Mammary epithelial cell (primary cell): ENCODE measurements at regions of chr19 and their contacts with region 1.

Region 1: DNA sequence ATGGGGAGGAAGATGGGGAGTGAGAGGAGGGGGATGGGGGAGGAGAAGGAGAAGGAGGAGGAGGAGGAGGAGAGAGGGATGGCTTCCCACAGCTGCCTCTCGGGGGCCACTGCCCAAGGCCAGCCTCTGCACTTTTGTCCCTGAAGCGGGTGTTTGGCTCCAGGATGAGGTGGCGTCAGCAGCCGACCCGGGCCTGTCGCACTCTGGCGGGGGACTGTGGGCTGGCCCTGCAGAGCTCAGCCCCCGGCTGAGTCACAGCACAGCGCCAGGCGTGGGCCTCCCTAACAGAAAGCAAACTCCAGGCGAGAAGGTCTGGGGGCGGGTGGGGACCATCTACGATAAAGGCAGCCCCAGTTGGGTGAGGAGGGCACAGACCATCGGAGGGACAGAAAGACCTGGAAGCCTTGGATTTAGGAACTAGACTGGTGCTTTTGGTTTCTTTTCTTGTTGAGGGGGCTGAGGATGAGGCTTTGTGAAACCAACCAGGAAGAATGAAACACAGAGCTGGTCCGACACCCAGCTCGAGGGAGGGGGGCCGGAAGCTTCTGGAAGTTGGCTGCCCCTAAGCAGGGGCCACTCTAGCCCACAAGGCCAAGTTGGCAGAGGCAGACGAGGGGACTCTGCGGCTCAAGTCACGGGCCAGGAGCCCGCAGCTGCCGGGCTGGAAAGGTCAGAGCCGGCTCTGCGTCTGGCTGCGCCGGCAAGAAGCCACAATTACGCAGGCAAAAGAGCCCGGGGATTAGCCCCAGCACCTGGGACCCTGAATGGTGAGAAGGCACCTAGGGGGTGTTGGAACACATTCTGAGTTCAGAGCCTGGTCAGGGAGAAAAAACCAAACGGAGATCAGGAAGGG is 18.2 kb downstream of the LSM4 start:
- DNase-seq: peak; percentile 48
- H3K4me3 ChIP-seq: peak overlapping the region; percentile 8 to 21 (median 11)
- H3K27ac ChIP-seq: peak overlapping the region; percentile 66
- H3K4me1 ChIP-seq: peaks cover 28% of the 10 kb centered on the region
- H3K27me3 ChIP-seq: no peaks in the 10 kb centered on the region
- CTCF ChIP-seq: no peak

Region 2: DNA sequence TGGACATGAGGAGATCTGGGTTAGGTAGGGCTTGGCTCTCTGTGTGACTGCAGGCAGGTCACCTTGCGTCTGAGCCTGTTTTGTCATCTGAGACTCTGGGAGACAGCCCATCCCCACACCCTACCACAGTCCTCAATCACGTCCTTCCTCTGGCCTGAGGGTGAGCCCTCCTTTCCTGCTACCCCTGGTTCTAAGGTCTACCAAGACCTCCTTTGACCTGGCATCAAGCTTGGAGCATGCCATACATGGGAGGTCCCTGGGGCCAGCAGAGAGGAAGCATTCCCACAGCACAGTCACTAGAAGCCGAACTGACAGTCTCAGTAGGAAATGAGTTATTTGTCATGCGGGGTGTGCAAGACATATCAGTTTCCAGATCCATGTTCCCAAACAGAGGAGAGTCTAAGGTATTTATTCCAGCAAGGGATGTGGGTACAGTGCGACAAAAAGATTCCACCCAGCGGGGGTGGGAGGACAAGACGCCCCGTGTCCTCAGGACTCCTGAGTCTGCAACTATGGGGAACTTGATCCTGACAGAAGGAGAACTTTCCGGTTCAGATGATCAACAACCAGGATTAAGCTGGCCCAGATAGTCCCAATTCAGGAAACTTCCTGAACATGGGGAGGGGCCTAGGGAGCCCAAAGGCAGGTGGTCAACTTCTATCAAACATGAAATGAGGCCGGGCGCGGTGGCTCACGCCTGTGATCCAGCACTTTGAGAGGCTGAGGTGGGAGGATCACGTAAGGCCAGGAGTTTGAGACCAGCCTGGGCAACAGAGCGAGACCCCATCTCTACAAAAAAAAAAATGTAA is 287.2 kb before region 1 on chr19:
- CTCF ChIA-PET with region 1: no interaction called
- dilution Hi-C with region 1: loop called (anchors 5 kb)
- in situ Hi-C with region 1: no loop called
- intact Hi-C with region 1: no loop called
- DNase-seq: no peak
- H3K4me3 ChIP-seq: no peak overlapping the region
- H3K27ac ChIP-seq: no peak overlapping the region
- H3K4me1 ChIP-seq: peaks cover 18% of the 10 kb centered on the region
- H3K27me3 ChIP-seq: no peaks in the 10 kb centered on the region
- CTCF ChIP-seq: no peak

Region 3: DNA sequence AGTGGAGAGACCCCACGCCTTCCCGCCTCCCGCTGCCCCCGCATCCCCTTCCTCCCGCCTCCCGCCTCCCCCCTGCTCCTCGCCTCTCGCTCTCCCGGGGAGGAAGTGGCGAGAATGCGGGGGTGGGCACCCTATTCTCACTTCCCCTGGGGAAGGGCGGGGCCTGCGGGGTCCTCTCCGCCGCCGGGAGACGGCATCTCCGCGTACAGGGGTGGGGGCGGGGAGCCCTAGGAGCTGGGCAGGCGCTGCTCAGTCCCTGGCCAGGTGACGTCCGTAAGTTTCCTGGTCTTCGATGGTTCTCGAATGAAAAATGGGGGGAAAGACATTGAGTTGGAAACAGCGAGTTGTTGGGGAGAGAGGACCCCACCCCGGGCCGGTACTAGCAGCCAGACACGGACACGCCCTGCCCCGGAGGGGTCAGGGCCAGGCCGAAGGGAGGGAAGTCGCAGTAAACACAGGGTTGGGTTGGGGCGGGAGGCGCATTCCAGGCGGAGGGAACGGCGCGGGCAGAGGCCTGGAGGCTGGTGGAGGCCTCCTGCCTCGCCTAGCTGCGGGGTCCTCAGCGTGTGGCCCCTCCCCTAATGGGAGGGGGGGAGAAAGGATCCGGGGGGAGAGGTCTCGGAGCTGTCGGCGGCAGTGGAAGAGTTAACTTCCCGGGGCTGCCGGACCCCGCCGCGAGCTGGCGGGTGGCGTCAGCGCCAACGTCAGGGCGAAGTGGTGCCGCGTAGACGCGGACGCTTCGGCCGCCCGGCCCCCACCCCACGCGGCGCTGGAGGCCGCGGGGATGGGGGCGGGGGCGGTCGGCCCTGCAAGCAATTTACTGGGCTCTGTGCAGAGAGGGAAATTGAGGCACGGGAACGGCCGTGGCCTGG is 12.9 kb before region 1 on chr19:
- CTCF ChIA-PET with region 1: no interaction called
- dilution Hi-C with region 1: no loop called
- in situ Hi-C with region 1: no loop called
- intact Hi-C with region 1: no loop called
- DNase-seq: peak; percentile 41
- H3K4me3 ChIP-seq: peak overlapping the region; percentile 38 to 53 (median 45)
- H3K27ac ChIP-seq: peak overlapping the region; percentile 25
- H3K4me1 ChIP-seq: peaks cover 18% of the 10 kb centered on the region
- H3K27me3 ChIP-seq: no peaks in the 10 kb centered on the region
- CTCF ChIP-seq: no peak

Region 4: GRCh38 chr19:18322759-18323460 is 18.2 kb after region 1 on chr19 and contains the start of gene LSM4:
- CTCF ChIA-PET with region 1: no interaction called
- dilution Hi-C with region 1: no loop called
- in situ Hi-C with region 1: no loop called
- intact Hi-C with region 1: loop called (anchors 2 kb)
- DNase-seq: peak; percentile 98
- H3K4me3 ChIP-seq: peak within 1 kb of the TSS; percentile 73 to 95 (median 82)
- H3K27ac ChIP-seq: peak within 1 kb of the TSS; percentile 82
- H3K4me1 ChIP-seq: peaks cover 16% of the 10 kb centered on the region
- H3K27me3 ChIP-seq: no peaks in the 10 kb centered on the region
- CTCF ChIP-seq: peak; percentile 15 to 61
- total RNA-seq, gene LSM4: 127 to 182 TPM

Region 5: DNA sequence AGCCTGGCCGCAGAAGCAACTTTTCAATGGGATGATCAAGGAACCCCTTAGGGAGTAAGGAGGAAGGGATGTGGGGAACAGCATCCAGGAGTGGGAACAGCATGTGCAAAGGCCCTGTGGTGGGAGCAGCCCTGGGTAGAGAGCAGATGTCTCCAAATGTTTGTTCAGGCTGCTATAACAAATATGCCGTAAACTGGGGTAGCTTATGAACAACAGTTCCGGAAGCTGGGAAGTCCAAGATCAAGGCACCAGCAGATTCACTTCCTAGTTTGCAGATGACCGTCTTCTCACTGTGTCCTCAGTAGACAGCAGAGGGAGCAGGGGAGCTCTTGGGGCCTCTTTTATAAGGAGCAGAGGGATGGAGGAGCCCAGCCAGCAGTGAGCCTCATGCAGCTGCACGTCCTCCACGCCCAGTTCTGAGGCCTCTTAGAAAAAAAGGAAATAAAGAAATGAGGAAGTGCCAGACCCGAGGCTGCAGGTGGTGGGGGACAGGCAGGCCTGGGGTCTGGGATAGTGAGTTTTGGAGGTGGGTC is 97.0 kb after region 1 on chr19:
- CTCF ChIA-PET with region 1: no interaction called
- dilution Hi-C with region 1: loop called (anchors 10 kb)
- in situ Hi-C with region 1: no loop called
- intact Hi-C with region 1: no loop called
- DNase-seq: peak; percentile 60
- H3K4me3 ChIP-seq: no peak overlapping the region
- H3K27ac ChIP-seq: no peak overlapping the region
- H3K4me1 ChIP-seq: peaks cover 3% of the 10 kb centered on the region
- H3K27me3 ChIP-seq: no peaks in the 10 kb centered on the region
- CTCF ChIP-seq: peak; percentile 24 to 54

Region 6: DNA sequence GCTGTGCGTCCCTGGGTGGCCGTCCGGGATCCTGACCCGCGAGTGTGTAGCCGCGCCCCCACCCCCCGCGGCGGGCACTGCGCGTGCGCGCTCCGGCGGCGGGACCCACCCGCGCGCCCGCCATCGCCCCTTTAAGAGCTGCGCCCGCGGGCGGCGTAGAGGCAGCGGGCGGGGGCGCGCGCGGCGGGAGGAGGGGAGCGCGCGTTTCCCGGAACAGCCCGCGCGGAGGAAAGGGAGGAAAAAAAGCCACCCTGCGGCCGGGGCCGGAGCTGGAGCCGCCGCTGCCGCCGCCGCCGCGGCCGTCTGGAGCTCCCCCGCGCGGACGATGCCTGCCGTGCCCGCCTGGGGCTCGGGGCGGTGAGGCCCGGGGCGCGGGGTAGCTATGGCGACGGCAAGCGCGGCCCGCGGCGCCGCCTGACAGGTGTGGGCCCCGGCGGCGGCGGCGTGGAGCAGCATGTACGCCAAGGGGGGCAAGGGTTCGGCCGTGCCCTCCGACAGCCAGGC is 114.6 kb after region 1 on chr19 and contains the start of gene SSBP4:
- CTCF ChIA-PET with region 1: no interaction called
- dilution Hi-C with region 1: loop called (anchors 5 kb)
- in situ Hi-C with region 1: no loop called
- intact Hi-C with region 1: no loop called
- DNase-seq: peak; percentile 68
- H3K4me3 ChIP-seq: peak within 1 kb of the TSS; percentile 59 to 69 (median 60)
- H3K27ac ChIP-seq: no peak within 1 kb of the TSS
- H3K4me1 ChIP-seq: peaks cover 27% of the 10 kb centered on the region
- H3K27me3 ChIP-seq: no peaks in the 10 kb centered on the region
- CTCF ChIP-seq: peak in 1 of 2 donors; percentile 31
- total RNA-seq, gene SSBP4: 34.0 to 41.0 TPM

Region 7: DNA sequence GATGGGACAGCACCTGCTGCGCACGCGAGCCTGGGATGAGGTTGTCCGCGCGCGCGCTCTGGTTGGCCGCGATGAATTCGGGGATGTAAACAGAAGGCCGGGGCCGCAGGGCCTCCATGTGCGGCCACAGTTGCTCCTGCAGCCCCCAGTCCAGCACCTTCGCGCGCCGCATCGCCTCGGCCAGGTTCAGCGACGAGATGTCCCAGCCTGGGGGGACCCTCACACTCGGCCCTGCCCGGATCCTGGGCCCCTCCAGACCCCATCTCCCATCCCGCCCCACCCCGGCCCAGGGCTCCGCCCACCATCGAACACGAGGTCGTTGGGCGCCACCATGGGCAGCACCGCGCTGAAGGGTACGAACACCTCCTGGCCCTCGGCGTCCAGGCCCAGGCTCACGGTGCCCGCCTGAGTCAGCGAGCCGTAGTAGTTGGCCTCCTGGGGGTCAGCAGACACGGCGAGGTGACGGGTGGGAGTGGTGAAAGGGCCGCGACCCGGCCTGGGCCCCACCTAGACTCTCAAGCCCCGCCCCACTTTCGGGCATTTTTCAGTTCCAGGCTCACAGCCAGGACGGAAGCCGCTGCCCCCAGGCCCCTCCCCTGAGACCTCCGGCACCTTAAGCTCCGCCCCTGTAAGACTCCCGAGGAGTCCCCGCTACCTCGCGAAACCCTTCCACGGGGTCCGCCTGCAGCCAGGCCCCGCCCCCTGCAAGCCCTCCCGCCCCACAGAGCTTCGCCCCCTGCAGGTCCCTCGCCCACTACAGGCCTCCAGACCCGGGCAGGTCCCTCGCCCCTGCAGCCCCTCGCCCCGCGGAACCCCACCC is 132.2 kb after region 1 on chr19:
- CTCF ChIA-PET with region 1: no interaction called
- dilution Hi-C with region 1: no loop called
- in situ Hi-C with region 1: no loop called
- intact Hi-C with region 1: no loop called
- DNase-seq: no peak
- H3K4me3 ChIP-seq: peak overlapping the region in 2 of 3 experiments; percentile 1 to 14
- H3K27ac ChIP-seq: no peak overlapping the region
- H3K4me1 ChIP-seq: peaks cover 40% of the 10 kb centered on the region
- H3K27me3 ChIP-seq: no peaks in the 10 kb centered on the region
- CTCF ChIP-seq: no peak

Region 8: DNA sequence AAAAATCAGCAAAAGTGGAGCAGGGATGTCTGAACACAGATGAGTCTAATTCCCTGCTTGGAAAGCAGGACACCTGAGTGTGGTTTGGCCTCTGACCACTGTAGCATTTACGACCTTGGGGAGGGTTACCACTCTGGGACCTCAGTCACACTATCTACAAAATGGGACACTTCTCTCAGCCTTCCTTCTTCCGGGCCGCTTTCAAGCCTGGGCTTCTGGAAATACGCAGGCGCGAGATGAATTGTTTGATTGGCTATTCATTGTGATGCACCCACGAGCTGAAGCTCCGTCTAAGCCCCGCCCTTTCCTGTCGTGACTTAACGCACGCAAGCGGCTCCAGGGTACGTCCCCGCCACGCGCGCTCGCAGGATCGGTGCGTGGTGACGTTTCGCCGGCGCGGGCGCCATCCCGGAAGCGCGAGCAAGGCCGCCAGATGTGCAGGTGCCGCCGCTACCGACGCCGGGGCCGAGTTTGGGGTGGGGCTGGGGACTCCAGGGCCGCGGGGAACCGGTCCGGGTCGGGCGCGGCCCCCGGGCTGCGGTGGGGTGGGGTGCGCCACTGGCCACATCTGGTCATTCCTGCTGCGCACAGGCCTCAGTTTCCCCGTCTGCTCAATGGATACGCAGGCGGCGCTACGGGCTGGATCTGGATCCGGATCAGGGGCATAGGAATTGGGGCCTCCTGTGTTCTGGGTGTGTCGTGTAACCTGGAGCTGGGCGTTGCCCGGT is 253.0 kb after region 1 on chr19 and contains the start of gene KXD1:
- CTCF ChIA-PET with region 1: no interaction called
- dilution Hi-C with region 1: loop called (anchors 10 kb)
- in situ Hi-C with region 1: no loop called
- intact Hi-C with region 1: no loop called
- DNase-seq: peak; percentile 94
- H3K4me3 ChIP-seq: peak within 1 kb of the TSS; percentile 69 to 83 (median 81)
- H3K27ac ChIP-seq: peak within 1 kb of the TSS; percentile 73
- H3K4me1 ChIP-seq: no peaks in the 10 kb centered on the region
- H3K27me3 ChIP-seq: no peaks in the 10 kb centered on the region
- CTCF ChIP-seq: no peak
- total RNA-seq, gene KXD1: 83.9 to 98.2 TPM